ENCODE measurements at regions of chr1 and their contacts with region 1.

Region 1: DNA sequence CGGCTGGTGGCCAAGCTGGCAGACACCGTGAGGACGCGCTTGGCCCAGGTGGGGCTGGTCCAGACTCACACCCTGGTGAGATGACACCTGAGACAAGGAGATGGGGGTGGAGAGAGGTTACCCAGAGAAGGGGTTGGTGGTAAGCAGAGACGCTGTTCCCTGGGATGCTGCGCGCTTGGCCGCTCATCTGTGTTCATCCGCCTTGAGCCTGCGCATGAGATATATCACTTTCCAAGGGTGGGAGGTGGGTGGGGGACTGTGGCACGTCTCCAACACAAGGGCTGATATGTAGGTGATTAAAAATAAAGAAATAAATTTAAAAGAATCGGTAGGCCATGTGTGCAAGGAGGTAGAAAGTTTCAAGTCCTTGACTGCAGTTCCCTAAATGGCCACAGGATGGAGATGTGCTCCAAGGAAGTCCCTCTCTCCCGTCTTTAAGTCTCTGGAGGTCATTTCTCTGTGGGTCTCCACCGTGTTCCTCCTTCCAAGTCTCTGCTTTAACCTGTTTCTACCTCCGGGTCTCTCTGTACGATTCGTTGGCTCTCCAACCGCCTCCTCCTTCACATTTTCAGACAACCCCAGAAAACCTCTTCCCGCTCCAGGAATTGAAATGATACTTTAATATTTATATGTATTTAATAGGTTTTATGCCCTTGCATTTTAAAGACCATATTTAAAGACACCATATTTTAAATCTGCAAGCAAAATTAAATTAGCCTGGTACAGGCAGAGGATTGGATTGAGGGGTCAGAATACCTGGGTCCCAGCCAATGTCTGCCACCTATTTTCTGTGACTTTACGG is 4.5 kb downstream of the TTC24 start:
- DNase-seq: peak; percentile 74
- H3K4me3 ChIP-seq: no peak overlapping the region
- H3K27ac ChIP-seq: no peak overlapping the region
- H3K4me1 ChIP-seq: no peaks in the 10 kb centered on the region
- H3K27me3 ChIP-seq: no peaks in the 10 kb centered on the region
- CTCF ChIP-seq: peak; percentile 88 to 93 (median 90)
- POLR2A ChIP-seq: no peak

Region 2: GRCh38 chr1:156489166-156489934 is 94.7 kb before region 1 on chr1:
- intact Hi-C with region 1: no loop called
- DNase-seq: no peak
- H3K4me3 ChIP-seq: peak overlapping the region in 1 of 2 donors; percentile 7
- H3K27ac ChIP-seq: peak overlapping the region; percentile 80 to 86
- H3K4me1 ChIP-seq: peaks cover 56% of the 10 kb centered on the region
- H3K27me3 ChIP-seq: no peaks in the 10 kb centered on the region
- CTCF ChIP-seq: peak in 2 of 4 experiments; percentile 26 to 36
- POLR2A ChIP-seq: no peak

Region 3: GRCh38 chr1:156625436-156626078 is 41.5 kb after region 1 on chr1:
- intact Hi-C with region 1: loop called (anchors 5 kb)
- DNase-seq: no peak
- H3K4me3 ChIP-seq: peak overlapping the region; percentile 25 to 29
- H3K27ac ChIP-seq: peak overlapping the region; percentile 58 to 71
- H3K4me1 ChIP-seq: peaks cover 7% of the 10 kb centered on the region
- H3K27me3 ChIP-seq: peaks cover 10% of the 10 kb centered on the region
- CTCF ChIP-seq: peak; percentile 34 to 80 (median 74)
- POLR2A ChIP-seq: no peak